ENCODE measurements at regions of chr4 and their contacts with region 1.

Region 1: DNA sequence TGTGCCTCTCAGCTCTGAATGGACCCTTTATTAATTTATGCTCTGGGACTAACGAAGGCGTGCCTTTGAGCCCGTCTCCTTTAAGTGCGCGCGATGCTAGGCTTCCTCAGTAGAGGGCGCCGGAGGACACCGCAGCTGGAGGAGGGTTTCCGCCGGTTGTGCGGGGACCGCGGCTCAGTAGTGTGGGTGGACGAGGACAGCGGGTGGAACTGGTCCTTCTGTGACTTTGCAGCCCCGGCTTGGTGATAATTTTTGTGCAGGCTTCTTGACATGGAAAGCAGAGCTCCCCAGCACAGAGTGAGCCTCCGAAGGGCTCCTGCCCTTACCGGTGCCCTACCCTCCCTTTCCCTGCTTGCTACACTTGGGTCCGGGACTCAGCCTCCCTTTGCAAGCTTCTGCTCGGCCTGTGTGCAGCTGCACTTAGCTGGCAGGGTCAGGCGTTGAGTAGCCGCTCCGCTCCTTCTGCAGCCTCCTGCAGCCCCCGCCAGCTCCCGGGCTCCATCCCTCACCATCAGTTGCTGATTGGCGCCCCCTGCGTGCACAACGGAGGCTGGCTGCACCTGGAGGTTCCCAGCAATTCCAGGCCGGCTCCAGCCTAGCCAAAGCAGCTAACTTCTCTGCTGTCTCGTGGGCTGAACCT is 26.8 kb upstream of the BOD1L1 start:
- DNase-seq: peak; percentile 87
- H3K4me3 Mint-ChIP-seq: peak overlapping the region; percentile 78
- H3K27ac Mint-ChIP-seq: no peak overlapping the region
- H3K4me1 Mint-ChIP-seq: peaks cover 12% of the 10 kb centered on the region
- H3K27me3 Mint-ChIP-seq: peaks cover 21% of the 10 kb centered on the region

Region 2: GRCh38 chr4:13627606-13628301 is 26.5 kb before region 1 on chr4 and contains the start of gene BOD1L1:
- CTCF ChIA-PET with region 1: interaction called, 16 read pairs
- DNase-seq: peak; percentile 85
- H3K4me3 Mint-ChIP-seq: peak within 1 kb of the TSS; percentile 91
- H3K27ac Mint-ChIP-seq: peak within 1 kb of the TSS; percentile 88
- H3K4me1 Mint-ChIP-seq: peaks cover 33% of the 10 kb centered on the region
- H3K27me3 Mint-ChIP-seq: peaks cover 8% of the 10 kb centered on the region

Region 3: GRCh38 chr4:13642170-13642950 is 11.9 kb before region 1 on chr4:
- CTCF ChIA-PET with region 1: interaction called, 25 read pairs
- DNase-seq: no peak
- H3K4me3 Mint-ChIP-seq: no peak overlapping the region
- H3K27ac Mint-ChIP-seq: no peak overlapping the region
- H3K4me1 Mint-ChIP-seq: peaks cover 7% of the 10 kb centered on the region
- H3K27me3 Mint-ChIP-seq: peaks cover 43% of the 10 kb centered on the region

Region 4: GRCh38 chr4:13750594-13750993 is 96.3 kb after region 1 on chr4:
- CTCF ChIA-PET with region 1: no interaction called
- DNase-seq: no peak
- H3K4me3 Mint-ChIP-seq: no peak overlapping the region
- H3K27ac Mint-ChIP-seq: no peak overlapping the region
- H3K4me1 Mint-ChIP-seq: no peaks in the 10 kb centered on the region
- H3K27me3 Mint-ChIP-seq: no peaks in the 10 kb centered on the region

Region 5: DNA sequence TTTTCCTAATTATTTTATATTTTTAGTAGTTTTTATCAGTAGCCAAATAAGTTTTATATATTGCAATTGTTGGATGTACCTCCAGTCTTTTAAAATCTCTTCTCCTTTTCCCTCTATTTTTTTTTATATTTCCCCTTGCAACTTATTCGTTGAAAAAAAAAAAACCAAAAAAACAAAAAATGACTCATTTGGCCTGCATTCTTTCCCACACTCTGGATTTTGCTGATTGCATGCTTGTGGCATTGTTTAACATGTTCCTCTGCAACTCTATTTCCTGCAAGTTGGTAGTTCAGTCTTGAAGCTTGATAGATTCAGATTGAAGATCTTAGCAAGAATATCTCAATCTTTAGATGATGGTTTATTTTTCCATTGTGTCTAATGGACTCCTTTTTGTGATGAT is 233.8 kb after region 1 on chr4:
- CTCF ChIA-PET with region 1: no interaction called
- DNase-seq: no peak
- H3K4me3 Mint-ChIP-seq: no peak overlapping the region
- H3K27ac Mint-ChIP-seq: no peak overlapping the region
- H3K4me1 Mint-ChIP-seq: no peaks in the 10 kb centered on the region
- H3K27me3 Mint-ChIP-seq: no peaks in the 10 kb centered on the region

Measured in activated naive CD4-positive, alpha-beta T cell treated with anti-CD3 and anti-CD28 coated beads, Interleukin-2, amount 10 ng/mL, durations not matched to agents 7 days and 5 days (primary cell).